ENCODE measurements at regions of chr6 and their contacts with region 1.

Region 1: GRCh38 chr6:71879016-71879415 is 7.3 kb upstream of the RIMS1 start:
- DNase-seq: no peak
- H3K4me3 ChIP-seq: no peak overlapping the region
- H3K27ac ChIP-seq: no peak overlapping the region
- H3K4me1 ChIP-seq: no peaks in the 10 kb centered on the region
- H3K27me3 ChIP-seq: no peaks in the 10 kb centered on the region
- CTCF ChIP-seq: no peak

Region 2: DNA sequence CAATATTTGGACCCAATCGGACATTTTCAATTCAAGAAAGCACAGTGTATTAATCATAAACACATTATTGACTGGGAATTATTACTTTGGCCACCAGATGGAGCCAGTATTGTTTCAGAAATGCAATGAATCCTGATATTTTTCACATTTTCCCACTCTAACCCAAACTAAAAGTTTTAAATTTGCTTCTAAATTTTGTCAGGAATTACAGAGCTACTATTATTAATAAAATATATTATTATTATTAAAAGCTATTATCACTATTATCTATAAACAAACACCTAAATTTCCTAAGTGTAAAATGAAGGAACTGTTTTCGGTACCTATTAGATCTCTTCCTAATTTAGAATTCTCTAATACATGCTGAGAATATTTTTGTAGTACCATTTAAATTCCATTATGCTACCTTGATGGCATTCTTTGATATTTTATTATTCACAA is 345.1 kb before region 1 on chr6:
- CTCF ChIA-PET with region 1: no interaction called
- dilution Hi-C with region 1: no loop called
- in situ Hi-C with region 1: no loop called
- intact Hi-C with region 1: loop called (anchors 10 kb)
- DNase-seq: no peak
- H3K4me3 ChIP-seq: no peak overlapping the region
- H3K27ac ChIP-seq: no peak overlapping the region
- H3K4me1 ChIP-seq: no peaks in the 10 kb centered on the region
- H3K27me3 ChIP-seq: no peaks in the 10 kb centered on the region
- CTCF ChIP-seq: peak; percentile 61 to 66

Region 3: GRCh38 chr6:72286911-72287311 is 407.9 kb after region 1 on chr6:
- CTCF ChIA-PET with region 1: no interaction called
- dilution Hi-C with region 1: no loop called
- in situ Hi-C with region 1: no loop called
- intact Hi-C with region 1: no loop called
- DNase-seq: peak; percentile 12
- H3K4me3 ChIP-seq: no peak overlapping the region
- H3K27ac ChIP-seq: no peak overlapping the region
- H3K4me1 ChIP-seq: no peaks in the 10 kb centered on the region
- H3K27me3 ChIP-seq: no peaks in the 10 kb centered on the region
- CTCF ChIP-seq: no peak

Measured in mammary epithelial cell (primary cell).